GM12878 (cell line): ENCODE measurements at regions of chr3 and their contacts with region 1.

Region 1: GRCh38 chr3:114867835-114868503 is 279.1 kb downstream of the ZBTB20 start:
- DNase-seq: no peak
- ATAC-seq: no peak
- H3K4me3 ChIP-seq: no peak overlapping the region
- H3K27ac ChIP-seq: no peak overlapping the region
- H3K4me1 ChIP-seq: no peaks in the 10 kb centered on the region; the same call in 1 of the 2 replicates
- H3K27me3 ChIP-seq: no peaks in the 10 kb centered on the region
- CTCF ChIP-seq: no peak
- EP300 ChIP-seq: no peak
- POLR2A ChIP-seq: no peak
- RAD21 ChIP-seq: no peak

Region 2: DNA sequence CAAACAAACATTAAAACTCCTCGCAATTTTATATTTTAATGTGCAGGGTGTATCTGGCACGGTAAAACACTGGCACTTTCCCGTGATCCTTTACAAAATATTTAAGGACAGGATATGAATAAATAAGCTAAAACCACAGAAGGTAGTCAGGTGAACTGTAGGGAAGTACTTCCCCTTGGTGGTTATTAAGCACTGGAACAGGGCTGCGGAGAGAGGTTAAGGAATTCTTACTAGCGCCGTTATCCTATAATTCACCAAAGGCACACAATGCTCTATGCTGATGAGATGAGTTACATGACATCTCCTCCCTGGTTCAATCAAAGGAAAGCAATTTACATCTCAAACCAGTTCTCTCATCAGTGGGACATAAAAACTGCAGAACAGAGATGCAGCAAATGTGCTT is 10.7 kb before region 1 on chr3:
- CTCF ChIA-PET with region 1: interaction called, 5 read pairs
- POLR2A ChIA-PET with region 1: no interaction called
- RAD21 ChIA-PET with region 1: no interaction called
- SMC1A ChIA-PET with region 1: interaction called, 18 read pairs
- in situ Hi-C with region 1: no loop called
- intact Hi-C with region 1: no loop called
- DNase-seq: no peak
- ATAC-seq: no peak
- H3K4me3 ChIP-seq: no peak overlapping the region
- H3K27ac ChIP-seq: no peak overlapping the region
- H3K4me1 ChIP-seq: peaks cover 7% of the 10 kb centered on the region; the same call in 1 of the 2 replicates
- H3K27me3 ChIP-seq: no peaks in the 10 kb centered on the region
- CTCF ChIP-seq: no peak
- EP300 ChIP-seq: no peak
- POLR2A ChIP-seq: no peak
- RAD21 ChIP-seq: no peak